K562 (cell line): ENCODE measurements at regions of chr19 and their contacts with region 1.

Region 1: DNA sequence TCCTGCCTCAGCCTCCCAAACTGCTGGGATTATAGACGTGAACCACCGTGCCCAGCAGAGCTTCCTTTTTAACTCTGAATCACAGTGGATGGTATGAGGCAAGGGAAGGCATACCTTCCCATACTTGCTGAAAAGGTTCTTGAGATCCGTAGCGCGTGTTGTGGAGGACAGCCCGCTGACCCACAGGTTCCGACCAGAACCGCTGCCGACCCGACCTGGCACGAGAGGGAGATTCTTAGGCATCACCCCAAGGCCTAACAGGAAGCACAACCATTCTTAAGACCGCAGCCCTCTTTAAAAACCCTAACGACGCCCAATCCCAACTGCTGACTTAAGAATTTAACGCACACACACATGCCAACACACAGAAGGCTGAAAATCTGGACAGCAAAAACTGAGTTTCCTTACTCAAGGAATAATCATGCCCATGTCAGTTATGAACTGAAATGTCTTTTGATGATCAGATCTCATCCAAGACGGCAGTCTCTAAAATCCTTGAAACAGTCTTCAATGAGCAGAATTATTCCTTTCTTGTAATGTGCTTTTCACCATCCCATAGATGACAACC is 12.6 kb downstream of the SAFB2 start:
- DNase-seq: no peak
- ATAC-seq: no peak
- H3K4me3 ChIP-seq: no peak overlapping the region
- H3K27ac ChIP-seq: no peak overlapping the region
- H3K4me1 ChIP-seq: no peaks in the 10 kb centered on the region
- H3K27me3 ChIP-seq: no peaks in the 10 kb centered on the region
- CTCF ChIP-seq: no peak
- EP300 ChIP-seq: no peak
- POLR2A ChIP-seq: no peak
- RAD21 ChIP-seq: no peak

Region 2: GRCh38 chr19:5622463-5623396 is 12.8 kb after region 1 on chr19 and contains the starts of genes SAFB and SAFB2:
- CTCF ChIA-PET with region 1: no interaction called
- POLR2A ChIA-PET with region 1: interaction called, 19 read pairs
- in situ Hi-C with region 1: no loop called
- intact Hi-C with region 1: no loop called
- DNase-seq: peak; percentile 98 to 100 (median 98)
- ATAC-seq: peak; percentile 91
- H3K4me3 ChIP-seq: peak within 1 kb of the TSS; percentile 82
- H3K27ac ChIP-seq: peak within 1 kb of the TSS; percentile 97
- H3K4me1 ChIP-seq: peaks cover 30 to 47% of the 10 kb centered on the region in 2 experiments
- H3K27me3 ChIP-seq: no peaks in the 10 kb centered on the region
- CTCF ChIP-seq: no peak
- EP300 ChIP-seq: 0 out of 2 replicates have a peak, but pooled peaks have one; percentile 3
- POLR2A ChIP-seq: peak; percentile 97
- RAD21 ChIP-seq: no peak
- polyA plus RNA-seq, gene SAFB: 1.1 to 1.8 TPM
- polyA plus RNA-seq, gene SAFB2: 4.5 to 6.9 TPM